ENCODE measurements at regions of chr6 and their contacts with region 1.

Region 1: DNA sequence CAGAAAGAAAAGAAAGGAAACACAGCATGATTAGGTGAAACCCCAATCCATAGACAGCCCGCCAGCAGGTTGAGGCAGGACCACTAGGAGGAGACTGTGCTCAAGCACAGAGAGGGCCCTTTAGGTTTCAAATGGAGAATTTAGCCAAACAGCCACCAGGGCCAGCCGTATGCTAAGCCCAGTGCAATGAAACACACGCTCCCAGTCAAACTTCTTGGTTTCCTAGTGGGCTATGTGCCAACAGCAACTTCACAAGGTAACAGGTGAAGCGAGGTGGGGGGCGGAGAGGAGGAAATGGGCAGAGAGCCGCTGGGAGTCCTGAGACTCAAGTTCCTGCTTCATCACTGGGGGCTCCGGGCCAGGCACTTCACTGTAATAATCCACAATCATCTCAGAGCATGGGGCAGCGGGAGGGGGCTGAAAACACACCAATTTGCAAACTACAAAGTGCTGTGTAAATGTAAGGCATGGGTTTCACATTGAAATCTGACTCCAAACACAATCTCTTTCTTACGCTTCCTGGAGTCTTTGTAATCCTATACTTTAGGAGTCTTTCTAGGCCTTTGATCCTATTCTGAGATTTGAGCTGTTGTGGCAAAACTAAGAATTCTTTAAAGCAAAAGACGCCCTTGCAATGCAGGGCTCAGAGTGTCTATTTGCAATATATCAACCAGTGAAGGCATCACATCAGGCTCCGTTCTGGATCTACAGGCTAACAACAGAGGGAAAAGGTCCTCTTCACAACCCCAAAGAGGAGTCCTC is 117.3 kb downstream of the OPRM1 start:
- DNase-seq: peak; percentile 68

Region 2: GRCh38 chr6:153727885-153728284 is 428.4 kb before region 1 on chr6:
- in situ Hi-C with region 1: no loop called
- DNase-seq: no peak

Region 3: GRCh38 chr6:154276810-154277628 is 120.7 kb after region 1 on chr6:
- in situ Hi-C with region 1: loop called (anchors 10 kb)
- DNase-seq: peak; percentile 55

Region 4: GRCh38 chr6:154386848-154387717 is 230.8 kb after region 1 on chr6:
- in situ Hi-C with region 1: loop called (anchors 25 kb)
- DNase-seq: no peak